Dendritic cell treated with granulocyte-macrophage colony-stimulating factor and Interleukin-4, amounts not matched to agents 40 ng/mL and 50 ng/mL, for 4 days (primary cell): ENCODE measurements at regions of chr4 and their contacts with region 1.

Region 1: DNA sequence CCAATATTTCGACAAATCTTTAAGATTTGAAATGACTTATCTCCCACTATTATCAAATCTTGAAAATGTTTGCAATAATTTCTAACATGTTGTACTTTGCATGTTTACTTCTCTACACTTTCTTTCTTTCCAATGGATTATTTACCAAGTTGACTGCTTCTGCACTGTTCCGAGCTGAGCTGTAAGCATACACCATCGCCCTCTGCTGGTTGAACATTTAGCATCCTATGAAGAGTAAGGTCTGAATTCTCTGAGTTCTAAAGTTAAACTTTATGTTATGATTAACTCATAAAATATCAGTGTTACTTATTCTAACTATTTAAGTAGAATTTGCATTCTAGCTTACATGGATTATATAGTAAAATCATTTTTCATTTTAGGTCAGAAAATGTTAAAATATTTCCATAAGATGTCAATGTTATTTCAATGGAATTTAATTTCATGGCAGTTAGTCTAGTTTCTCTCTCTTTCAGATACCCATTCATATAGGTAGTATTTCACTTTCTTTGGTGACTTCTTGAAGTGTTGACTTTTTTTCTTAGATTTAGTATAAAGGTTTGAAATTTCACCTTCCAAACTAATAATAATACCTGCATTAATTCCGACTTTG is 137.4 kb downstream of the DKK2 start:
- H3K4me3 Mint-ChIP-seq: no peak overlapping the region
- H3K27ac Mint-ChIP-seq: no peak overlapping the region
- H3K4me1 Mint-ChIP-seq: no peaks in the 10 kb centered on the region
- H3K27me3 Mint-ChIP-seq: no peaks in the 10 kb centered on the region

Region 2: DNA sequence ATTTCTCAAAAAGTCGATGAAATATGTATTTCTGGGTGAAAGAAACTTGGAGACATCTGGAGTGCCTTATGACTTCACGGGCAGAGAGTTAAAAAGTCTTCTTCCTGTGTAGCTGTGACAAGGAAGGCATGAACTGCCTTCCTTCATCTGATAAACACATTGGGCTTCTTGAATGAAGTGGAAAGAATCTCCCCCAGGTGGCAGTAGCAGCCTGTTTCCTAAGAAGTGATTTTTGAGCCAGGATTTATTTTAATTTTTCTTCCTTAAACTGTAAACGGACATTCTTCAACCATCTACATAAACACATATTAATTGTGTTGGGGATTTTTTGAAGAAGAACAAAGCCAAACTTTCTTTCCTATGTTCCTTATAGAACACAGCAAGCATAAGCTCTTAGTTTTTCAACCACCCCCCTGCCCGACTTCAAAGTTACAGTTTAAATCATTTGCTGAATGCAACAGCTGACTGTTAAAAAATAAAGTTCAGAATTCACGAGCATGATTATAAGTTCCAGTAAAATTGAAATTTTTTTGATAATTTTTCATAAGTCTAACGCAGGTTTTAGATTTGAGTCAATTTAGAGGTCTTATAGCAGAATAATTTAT is 529.2 kb before region 1 on chr4:
- intact Hi-C with region 1: loop called (anchors 1 kb)
- H3K4me3 Mint-ChIP-seq: no peak overlapping the region
- H3K27ac Mint-ChIP-seq: no peak overlapping the region
- H3K4me1 Mint-ChIP-seq: peaks cover 14% of the 10 kb centered on the region
- H3K27me3 Mint-ChIP-seq: peaks cover 5% of the 10 kb centered on the region